Activated CD4-positive, alpha-beta T cell treated with anti-CD3 and anti-CD28 coated beads, Interleukin-2, amount 10 ng/mL, durations not matched to agents 7 days and 5 days (primary cell): ENCODE measurements at regions of chr11 and their contacts with region 1.

Region 1: GRCh38 chr11:44524751-44525201 is 40.7 kb upstream of the CD82 start:
- DNase-seq: no peak
- H3K4me3 Mint-ChIP-seq: no peak overlapping the region
- H3K27ac Mint-ChIP-seq: no peak overlapping the region
- H3K4me1 Mint-ChIP-seq: peaks cover 11% of the 10 kb centered on the region
- H3K27me3 Mint-ChIP-seq: peaks cover 5% of the 10 kb centered on the region

Region 2: GRCh38 chr11:44456544-44457300 is 68.1 kb before region 1 on chr11:
- CTCF ChIA-PET with region 1: no interaction called
- POLR2A ChIA-PET with region 1: no interaction called
- DNase-seq: no peak
- H3K4me3 Mint-ChIP-seq: no peak overlapping the region
- H3K27ac Mint-ChIP-seq: no peak overlapping the region
- H3K4me1 Mint-ChIP-seq: no peaks in the 10 kb centered on the region
- H3K27me3 Mint-ChIP-seq: no peaks in the 10 kb centered on the region

Region 3: GRCh38 chr11:44538375-44539054 is 13.7 kb after region 1 on chr11:
- CTCF ChIA-PET with region 1: interaction called, 19 read pairs
- POLR2A ChIA-PET with region 1: no interaction called
- DNase-seq: peak; percentile 75
- H3K4me3 Mint-ChIP-seq: no peak overlapping the region
- H3K27ac Mint-ChIP-seq: no peak overlapping the region
- H3K4me1 Mint-ChIP-seq: peaks cover 3% of the 10 kb centered on the region
- H3K27me3 Mint-ChIP-seq: no peaks in the 10 kb centered on the region